Motor neuron (in vitro differentiated cells): ENCODE measurements at regions of chr6 and their contacts with region 1.

Region 1: GRCh38 chr6:167141667-167142432 is 15.9 kb downstream of the GPR31 start:
- ATAC-seq: peak; percentile 58 to 83 (median 75)
- H3K4me3 ChIP-seq: no peak overlapping the region
- H3K27ac ChIP-seq: no peak overlapping the region
- H3K4me1 ChIP-seq: peaks cover 17 to 22% of the 10 kb centered on the region in 2 donors

Region 2: DNA sequence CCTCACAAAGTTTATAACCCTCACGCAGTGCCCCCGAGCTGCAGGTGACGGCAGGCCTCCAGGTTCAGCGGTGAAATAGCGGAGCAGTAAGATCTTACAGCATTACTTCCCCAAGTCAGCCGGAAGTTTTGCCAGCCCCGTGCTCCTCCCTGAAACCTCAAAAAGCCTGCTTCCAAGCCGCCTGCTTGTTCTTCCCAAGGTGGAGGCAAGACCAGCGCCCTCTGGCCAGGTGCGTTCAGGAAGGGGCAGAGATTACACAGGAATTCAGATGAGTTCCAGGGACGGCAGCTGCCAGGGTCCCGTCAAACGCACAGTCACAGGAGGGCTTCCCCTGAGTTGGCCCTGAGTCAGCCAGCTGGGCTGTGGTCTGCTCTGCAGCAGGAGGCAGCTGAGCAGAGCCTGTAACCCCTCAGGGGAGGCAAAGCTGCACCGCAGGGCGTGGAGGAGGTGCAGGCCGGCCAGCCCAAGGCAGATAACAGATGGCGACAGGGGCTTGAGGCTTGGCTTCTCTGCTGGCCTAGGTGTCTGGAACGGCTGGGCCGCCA is 390.7 kb before region 1 on chr6:
- in situ Hi-C with region 1: loop called in 2 of 9 experiments (anchors 25 kb)
- ATAC-seq: peak in 6 of 8 experiments; percentile 12 to 76 (median 56)
- H3K4me3 ChIP-seq: no peak overlapping the region
- H3K27ac ChIP-seq: no peak overlapping the region
- H3K4me1 ChIP-seq: peaks cover 10 to 16% of the 10 kb centered on the region in 2 donors

Region 3: DNA sequence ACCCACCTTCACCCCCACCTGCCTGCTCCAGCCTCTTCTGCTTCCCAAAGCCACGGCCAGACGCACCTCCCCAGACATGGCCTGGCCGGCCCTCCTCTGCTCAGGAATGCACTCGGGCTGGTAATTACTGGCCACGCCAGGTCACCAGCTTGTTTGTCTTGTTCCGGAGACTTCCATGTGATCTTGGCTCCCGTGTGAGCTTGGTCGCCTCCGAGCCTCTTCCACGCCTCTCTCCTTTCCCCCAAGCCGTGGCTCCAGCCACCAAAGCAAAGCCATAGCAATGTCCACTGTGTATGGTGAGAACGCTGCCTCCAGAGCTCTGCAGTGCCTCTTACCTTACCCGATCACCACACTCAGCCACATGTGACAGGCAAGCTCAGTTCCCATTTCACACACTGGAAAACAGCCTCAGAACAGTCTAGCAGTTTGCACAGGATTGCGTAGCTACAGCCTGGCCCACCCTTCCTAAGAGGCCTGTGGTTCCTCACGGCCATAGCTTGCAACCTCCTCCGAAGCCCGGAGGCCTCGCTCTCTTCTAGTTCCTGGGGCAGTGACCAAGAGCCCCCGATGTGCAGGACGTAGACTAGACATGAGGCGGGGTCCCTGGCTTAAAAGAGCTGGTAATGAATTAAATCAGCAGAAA is 636.8 kb after region 1 on chr6:
- in situ Hi-C with region 1: no loop called
- ATAC-seq: no peak
- H3K4me3 ChIP-seq: no peak overlapping the region
- H3K27ac ChIP-seq: no peak overlapping the region
- H3K4me1 ChIP-seq: peaks cover 9 to 12% of the 10 kb centered on the region in 2 donors